Activated CD4-positive, alpha-beta memory T cell treated with anti-CD3 and anti-CD28 coated beads, Interleukin-2, amount 10 ng/mL, durations not matched to agents 7 days and 5 days (primary cell): ENCODE measurements at regions of chr20 and their contacts with region 1.

Region 1: GRCh38 chr20:47663333-47664067 is 121.8 kb downstream of the SULF2 start:
- DNase-seq: peak; percentile 80
- H3K4me3 Mint-ChIP-seq: no peak overlapping the region
- H3K27ac Mint-ChIP-seq: no peak overlapping the region
- H3K4me1 Mint-ChIP-seq: peaks cover 3% of the 10 kb centered on the region
- H3K27me3 Mint-ChIP-seq: no peaks in the 10 kb centered on the region

Region 2: GRCh38 chr20:47652775-47653174 is 10.7 kb before region 1 on chr20:
- CTCF ChIA-PET with region 1: interaction called, 14 read pairs
- POLR2A ChIA-PET with region 1: interaction called, 4 read pairs
- DNase-seq: no peak
- H3K4me3 Mint-ChIP-seq: no peak overlapping the region
- H3K27ac Mint-ChIP-seq: no peak overlapping the region
- H3K4me1 Mint-ChIP-seq: no peaks in the 10 kb centered on the region
- H3K27me3 Mint-ChIP-seq: no peaks in the 10 kb centered on the region

Region 3: DNA sequence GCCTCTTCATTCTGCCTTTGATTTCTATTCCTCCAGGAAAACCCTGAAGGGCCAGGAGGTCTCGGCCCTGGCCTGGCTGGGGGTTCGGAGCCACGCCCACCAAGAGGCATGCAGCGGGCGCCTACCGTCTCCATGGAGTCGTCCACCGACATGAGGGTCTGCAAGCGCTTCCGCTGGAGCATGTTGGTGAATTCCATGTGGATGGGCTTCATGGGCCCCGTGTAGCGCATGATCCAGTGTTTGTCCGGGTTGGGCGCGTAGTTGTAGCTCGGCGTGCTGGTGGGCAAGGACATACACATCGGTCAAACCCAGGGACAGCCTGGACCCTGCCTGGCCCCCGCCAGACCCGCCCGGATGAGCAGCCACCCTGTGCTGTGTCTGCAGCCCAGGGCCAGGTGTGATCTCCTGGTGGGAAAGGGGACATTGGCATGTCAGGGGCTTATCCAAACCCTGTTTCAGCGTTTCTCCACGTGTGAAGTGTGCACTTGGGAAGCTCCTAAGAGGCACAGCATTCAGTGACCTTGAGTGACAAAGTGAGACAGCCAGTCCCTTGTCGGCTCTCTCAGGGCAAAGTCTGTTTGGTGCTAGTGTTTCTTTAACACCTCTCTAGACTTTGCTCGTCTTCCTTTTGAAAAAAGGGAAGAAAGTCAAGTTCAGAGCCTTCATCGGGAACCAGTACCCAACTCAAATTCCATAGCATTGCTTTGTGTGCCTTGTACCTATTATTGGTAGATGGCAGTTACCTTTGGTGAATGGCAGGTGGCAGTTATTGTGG is 21.0 kb after region 1 on chr20:
- CTCF ChIA-PET with region 1: no interaction called
- POLR2A ChIA-PET with region 1: no interaction called
- DNase-seq: no peak
- H3K4me3 Mint-ChIP-seq: no peak overlapping the region
- H3K27ac Mint-ChIP-seq: no peak overlapping the region
- H3K4me1 Mint-ChIP-seq: no peaks in the 10 kb centered on the region
- H3K27me3 Mint-ChIP-seq: peaks cover 2% of the 10 kb centered on the region